Psoas muscle (tissue), 8 donors: ENCODE measurements at regions of chr7 and their contacts with region 1.

Region 1: DNA sequence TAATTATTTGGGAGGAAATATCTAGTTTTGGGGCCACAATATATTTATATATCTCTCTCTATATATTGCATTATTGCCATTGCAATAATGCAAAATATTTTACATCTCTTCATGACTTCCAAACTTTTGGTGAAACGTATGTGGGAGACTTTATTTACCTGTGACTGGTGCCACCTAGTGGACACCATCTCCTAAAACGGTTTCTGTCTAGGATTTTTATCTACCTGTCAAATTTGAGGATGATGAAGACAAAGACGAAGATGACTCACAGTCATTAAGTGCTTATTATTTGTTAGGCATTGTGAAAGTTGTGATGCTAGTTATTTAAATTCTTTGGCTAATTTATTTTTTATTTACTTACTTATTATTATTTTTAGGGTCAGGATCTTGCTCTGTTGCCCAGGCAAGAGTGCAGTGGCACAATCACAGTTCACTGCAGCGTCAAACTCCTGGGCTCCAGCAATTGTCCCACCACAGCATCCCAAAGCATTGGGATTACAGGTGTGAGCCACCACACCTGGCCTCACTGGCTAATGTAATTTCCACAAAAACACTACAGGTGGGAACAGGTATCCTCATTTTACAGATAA is 18.7 kb upstream of the CBLL1 start:
- DNase-seq: no peak
- ATAC-seq: peak in 1 of 4 donors; percentile 61
- H3K4me3 ChIP-seq: no peak overlapping the region
- H3K27ac ChIP-seq: no peak overlapping the region
- H3K4me1 ChIP-seq: no peaks in the 10 kb centered on the region
- H3K27me3 ChIP-seq: peaks cover 0 to 7% (median 0%) of the 10 kb centered on the region in 3 donors
- CTCF ChIP-seq: peak; percentile 74

Region 2: GRCh38 chr7:107201795-107202450 is 523.3 kb before region 1 on chr7:
- intact Hi-C with region 1: loop called in 1 of 2 experiments (anchors 10 kb)
- DNase-seq: peak; percentile 40 to 73
- ATAC-seq: peak; percentile 95 to 98 (median 98)
- H3K4me3 ChIP-seq: no peak overlapping the region
- H3K27ac ChIP-seq: peak overlapping the region; percentile 41
- H3K4me1 ChIP-seq: peaks cover 9% of the 10 kb centered on the region
- H3K27me3 ChIP-seq: no peaks in the 10 kb centered on the region
- CTCF ChIP-seq: peak; percentile 70

Region 3: GRCh38 chr7:107462740-107463444 is 262.4 kb before region 1 on chr7:
- intact Hi-C with region 1: loop called (anchors 1 to 2 kb)
- DNase-seq: peak; percentile 34 to 64
- ATAC-seq: peak; percentile 85 to 97 (median 88)
- H3K4me3 ChIP-seq: no peak overlapping the region
- H3K27ac ChIP-seq: no peak overlapping the region
- H3K4me1 ChIP-seq: no peaks in the 10 kb centered on the region
- H3K27me3 ChIP-seq: no peaks in the 10 kb centered on the region
- CTCF ChIP-seq: peak; percentile 77

Region 4: DNA sequence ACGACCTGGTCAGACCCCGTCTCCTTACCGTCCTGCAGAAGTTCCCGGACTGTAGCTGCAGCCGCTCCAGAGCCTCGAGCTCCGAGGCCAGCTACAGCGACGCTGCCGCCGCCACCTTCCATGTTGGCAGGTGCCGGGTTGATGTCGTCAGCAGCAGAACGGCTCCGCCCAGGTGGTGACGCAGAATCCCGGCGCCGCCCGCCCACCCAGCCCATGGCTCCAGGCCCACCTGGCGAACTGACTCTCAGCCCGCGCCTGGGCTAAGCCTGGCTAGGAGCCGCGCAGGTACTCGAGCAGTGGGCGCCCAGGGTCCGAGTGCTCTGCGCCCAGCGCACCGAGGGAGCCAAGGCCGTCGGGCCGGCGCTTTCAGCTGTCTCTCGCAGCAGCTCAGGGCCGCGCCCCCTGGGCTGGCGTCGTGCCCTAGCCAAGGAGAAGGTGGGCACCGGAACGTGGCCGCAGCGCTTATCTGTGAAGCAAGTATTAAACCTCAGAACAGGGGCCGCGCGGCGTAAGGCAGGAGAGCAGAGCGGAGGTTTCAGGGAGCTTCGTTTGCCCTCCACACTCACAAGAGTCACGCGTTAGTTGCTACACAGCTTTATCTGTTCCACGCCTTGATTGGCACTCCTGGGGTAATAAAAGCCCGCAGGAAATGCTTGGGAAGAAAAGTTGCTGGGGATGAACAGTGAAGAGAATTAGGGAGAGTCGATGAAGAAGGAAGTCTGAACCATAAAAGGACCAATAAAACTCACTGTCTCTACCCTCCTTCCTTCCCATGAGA is 161.3 kb before region 1 on chr7 and contains the starts of genes COG5 and DUS4L:
- intact Hi-C with region 1: loop called in 1 of 2 experiments (anchors 5 kb)
- DNase-seq: peak; percentile 82 to 92
- ATAC-seq: peak; percentile 96 to 98 (median 96)
- H3K4me3 ChIP-seq: peak within 1 kb of the TSS; percentile 84
- H3K27ac ChIP-seq: peak within 1 kb of the TSS; percentile 93
- H3K4me1 ChIP-seq: peaks cover 32% of the 10 kb centered on the region
- H3K27me3 ChIP-seq: no peaks in the 10 kb centered on the region
- CTCF ChIP-seq: no peak
- total RNA-seq, gene COG5: 18.8 to 35.1 (median 20.5) TPM
- total RNA-seq, gene DUS4L: 3.3 to 4.9 (median 4.3) TPM

Region 5: GRCh38 chr7:107579885-107580715 is 145.1 kb before region 1 on chr7 and contains the start of gene BCAP29:
- intact Hi-C with region 1: loop called in 1 of 2 experiments (anchors 10 kb)
- DNase-seq: peak; percentile 83 to 90
- ATAC-seq: peak; percentile 95 to 98 (median 96)
- H3K4me3 ChIP-seq: peak within 1 kb of the TSS; percentile 66
- H3K27ac ChIP-seq: peak within 1 kb of the TSS; percentile 94
- H3K4me1 ChIP-seq: peaks cover 16% of the 10 kb centered on the region
- H3K27me3 ChIP-seq: no peaks in the 10 kb centered on the region
- CTCF ChIP-seq: peak; percentile 43
- total RNA-seq, gene BCAP29: 48.5 to 72.6 (median 58.0) TPM

Region 6: DNA sequence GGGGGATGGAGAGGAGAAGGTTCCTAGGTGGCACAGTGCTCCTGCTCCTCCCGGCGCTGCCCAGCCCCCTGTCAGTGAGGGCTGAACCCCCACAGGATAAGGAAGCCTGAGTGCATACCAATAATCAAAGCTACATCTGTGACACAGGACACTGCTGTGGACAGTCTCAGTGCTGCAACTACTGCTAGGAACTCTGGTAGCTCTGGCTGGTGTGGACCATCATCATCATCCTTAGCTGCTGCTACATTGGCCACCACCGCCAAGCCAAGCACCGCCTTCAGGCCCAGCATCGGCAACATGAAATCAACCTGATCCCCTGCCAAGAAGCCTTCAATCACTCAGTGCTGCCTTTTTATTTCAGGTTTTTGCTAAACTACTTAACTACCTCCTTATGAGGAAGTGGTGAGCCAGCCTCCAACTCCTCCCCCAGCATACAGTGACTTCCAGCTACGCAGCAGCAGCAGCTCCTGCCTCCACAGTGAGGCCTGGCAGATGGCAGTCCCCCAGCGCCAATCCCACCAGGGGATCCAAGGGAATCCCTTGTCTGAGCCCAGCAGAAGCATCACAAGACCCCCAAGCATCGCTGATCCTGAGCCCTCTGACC is 96.7 kb before region 1 on chr7:
- intact Hi-C with region 1: loop called in 1 of 2 experiments (anchors 5 kb)
- DNase-seq: no peak
- ATAC-seq: no peak
- H3K4me3 ChIP-seq: no peak overlapping the region
- H3K27ac ChIP-seq: no peak overlapping the region
- H3K4me1 ChIP-seq: no peaks in the 10 kb centered on the region
- H3K27me3 ChIP-seq: no peaks in the 10 kb centered on the region
- CTCF ChIP-seq: no peak